Naive thymus-derived CD4-positive, alpha-beta T cell (primary cell): ENCODE measurements at regions of chr6 and their contacts with region 1.

Region 1: GRCh38 chr6:90586836-90587638 is at the start of gene MAP3K7:
- DNase-seq: peak; percentile 83 to 96 (median 93)
- ATAC-seq: peak; percentile 90
- H3K4me3 ChIP-seq: peak within 1 kb of the TSS; percentile 88
- H3K4me3 Mint-ChIP-seq: peak within 1 kb of the TSS; percentile 92 to 99 (median 96)
- H3K27ac ChIP-seq: peak within 1 kb of the TSS; percentile 93
- H3K27ac Mint-ChIP-seq: peak within 1 kb of the TSS; percentile 93 to 100 (median 99)
- H3K4me1 ChIP-seq: peaks cover 17 to 22% of the 10 kb centered on the region in 2 donors
- H3K4me1 Mint-ChIP-seq: peaks cover 24 to 49% (median 45%) of the 10 kb centered on the region in 7 donors
- H3K27me3 ChIP-seq: no peaks in the 10 kb centered on the region
- H3K27me3 Mint-ChIP-seq: peaks cover 5 to 36% (median 11%) of the 10 kb centered on the region in 5 donors
- total RNA-seq, gene MAP3K7: 16.1 to 38.5 (median 29.9) TPM

Region 2: DNA sequence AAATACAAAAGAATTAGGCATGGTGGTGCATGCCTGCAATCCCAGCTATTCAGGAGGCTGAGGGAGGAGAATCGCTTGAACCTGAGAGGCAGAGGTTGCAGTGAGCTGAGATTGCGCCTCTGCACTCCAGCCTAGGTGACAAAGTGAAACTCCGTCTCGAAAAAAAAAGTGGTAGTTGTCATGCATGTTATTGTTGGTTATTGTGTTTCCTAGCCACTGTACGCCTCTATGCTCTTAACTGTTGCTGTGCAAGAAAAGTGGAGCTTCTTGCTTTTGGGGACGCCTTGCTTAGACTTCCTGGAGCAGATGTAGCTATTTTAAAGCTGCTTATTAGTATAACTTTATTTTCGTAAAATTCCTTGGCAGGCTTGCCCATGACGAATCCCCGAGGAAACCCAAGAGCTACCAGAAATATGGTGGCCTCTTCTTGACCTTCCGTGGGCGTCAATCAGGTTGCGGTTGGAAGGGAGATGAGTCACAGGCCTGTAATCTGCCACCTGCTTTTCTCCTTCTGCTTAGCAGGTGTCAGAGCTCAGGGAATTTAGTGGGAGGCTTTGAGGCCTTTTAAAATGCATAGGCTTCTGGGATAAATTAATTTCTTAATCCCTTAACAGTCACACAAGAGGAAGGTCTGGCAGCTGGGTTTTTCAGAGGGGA is 1289.2 kb before region 1 on chr6:
- CTCF ChIA-PET with region 1: no interaction called
- POLR2A ChIA-PET with region 1: no interaction called
- intact Hi-C with region 1: loop called in 1 of 2 experiments (anchors 5 kb)
- DNase-seq: peak in 4 of 9 donors; percentile 19 to 72 (median 24)
- ATAC-seq: peak; percentile 78
- H3K4me3 ChIP-seq: no peak overlapping the region
- H3K4me3 Mint-ChIP-seq: peak overlapping the region in 9 of 10 donors; percentile 12 to 69 (median 34)
- H3K27ac ChIP-seq: no peak overlapping the region
- H3K27ac Mint-ChIP-seq: peak overlapping the region; percentile 15 to 95 (median 63)
- H3K4me1 ChIP-seq: peaks cover 16 to 17% of the 10 kb centered on the region in 2 donors
- H3K4me1 Mint-ChIP-seq: peaks cover 13 to 22% (median 18%) of the 10 kb centered on the region in 7 donors
- H3K27me3 ChIP-seq: no peaks in the 10 kb centered on the region
- H3K27me3 Mint-ChIP-seq: no peaks in the 10 kb centered on the region

Region 3: GRCh38 chr6:89352278-89353117 is 1234.5 kb before region 1 on chr6 and contains the start of gene UBE2J1:
- CTCF ChIA-PET with region 1: no interaction called
- POLR2A ChIA-PET with region 1: no interaction called
- intact Hi-C with region 1: loop called in 1 of 2 experiments (anchors 5 kb)
- DNase-seq: peak; percentile 34 to 87 (median 61)
- ATAC-seq: peak; percentile 89
- H3K4me3 ChIP-seq: peak within 1 kb of the TSS; percentile 67
- H3K4me3 Mint-ChIP-seq: peak within 1 kb of the TSS; percentile 96 to 100 (median 98)
- H3K27ac ChIP-seq: peak within 1 kb of the TSS; percentile 88
- H3K27ac Mint-ChIP-seq: peak within 1 kb of the TSS; percentile 95 to 98 (median 97)
- H3K4me1 ChIP-seq: peaks cover 27 to 30% of the 10 kb centered on the region in 2 donors
- H3K4me1 Mint-ChIP-seq: peaks cover 44 to 81% (median 72%) of the 10 kb centered on the region in 7 donors
- H3K27me3 ChIP-seq: no peaks in the 10 kb centered on the region
- H3K27me3 Mint-ChIP-seq: no peaks in the 10 kb centered on the region
- total RNA-seq, gene UBE2J1: 18.8 to 47.7 (median 27.7) TPM

Region 4: GRCh38 chr6:89432875-89433251 is 1154.2 kb before region 1 on chr6 and contains the start of gene ANKRD6:
- CTCF ChIA-PET with region 1: no interaction called
- POLR2A ChIA-PET with region 1: no interaction called
- intact Hi-C with region 1: loop called in 1 of 2 experiments (anchors 5 kb)
- DNase-seq: peak; percentile 61 to 96 (median 81)
- ATAC-seq: peak; percentile 98
- H3K4me3 ChIP-seq: peak within 1 kb of the TSS; percentile 63
- H3K4me3 Mint-ChIP-seq: peak within 1 kb of the TSS; percentile 83 to 95 (median 90)
- H3K27ac ChIP-seq: peak within 1 kb of the TSS; percentile 46
- H3K27ac Mint-ChIP-seq: peak within 1 kb of the TSS; percentile 43 to 93 (median 82)
- H3K4me1 ChIP-seq: peaks cover 7 to 13% of the 10 kb centered on the region in 2 donors
- H3K4me1 Mint-ChIP-seq: peaks cover 9 to 36% (median 22%) of the 10 kb centered on the region in 7 donors
- H3K27me3 ChIP-seq: no peaks in the 10 kb centered on the region
- H3K27me3 Mint-ChIP-seq: peaks cover 0 to 58% (median 0%) of the 10 kb centered on the region in 5 donors
- total RNA-seq, gene ANKRD6: 3.1 to 6.6 (median 3.8) TPM

Region 5: DNA sequence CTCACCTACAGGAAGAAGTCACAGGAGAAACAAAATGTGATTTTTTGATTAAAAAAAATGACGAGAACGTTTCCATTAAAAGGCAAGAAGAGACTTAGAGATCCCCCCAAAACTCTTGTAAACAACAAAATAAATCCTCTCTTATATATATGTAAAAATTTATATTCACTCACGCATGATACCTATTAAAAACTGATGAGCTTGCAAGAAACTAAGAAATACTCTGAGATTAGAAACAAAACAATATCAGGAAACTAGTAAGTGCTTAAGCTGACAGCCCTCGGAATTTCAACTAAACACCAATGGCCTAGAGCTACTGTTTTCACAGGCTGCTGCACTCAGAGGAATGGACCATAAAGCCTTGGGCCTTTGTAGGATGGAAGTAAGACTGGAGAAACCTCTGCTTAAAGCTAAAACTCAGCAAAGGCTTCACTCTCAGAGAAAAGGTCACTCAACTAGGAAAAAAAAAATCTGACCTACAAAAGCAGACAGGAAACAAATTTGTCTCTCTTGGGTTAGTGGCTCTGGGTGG is 63.2 kb before region 1 on chr6:
- CTCF ChIA-PET with region 1: no interaction called
- POLR2A ChIA-PET with region 1: no interaction called
- intact Hi-C with region 1: no loop called
- DNase-seq: no peak
- ATAC-seq: no peak
- H3K4me3 ChIP-seq: no peak overlapping the region
- H3K4me3 Mint-ChIP-seq: no peak overlapping the region
- H3K27ac ChIP-seq: no peak overlapping the region
- H3K27ac Mint-ChIP-seq: peak overlapping the region in 1 of 9 donors; percentile 25
- H3K4me1 ChIP-seq: no peaks in the 10 kb centered on the region
- H3K4me1 Mint-ChIP-seq: peaks cover 0 to 8% (median 0%) of the 10 kb centered on the region in 7 donors
- H3K27me3 ChIP-seq: no peaks in the 10 kb centered on the region
- H3K27me3 Mint-ChIP-seq: no peaks in the 10 kb centered on the region

Region 6: GRCh38 chr6:90559931-90560330 is 27.1 kb before region 1 on chr6:
- CTCF ChIA-PET with region 1: no interaction called
- POLR2A ChIA-PET with region 1: interaction called, 6 read pairs
- intact Hi-C with region 1: loop called in 1 of 2 experiments (anchors 1 kb)
- DNase-seq: no peak
- ATAC-seq: peak; percentile 37
- H3K4me3 ChIP-seq: no peak overlapping the region
- H3K4me3 Mint-ChIP-seq: peak overlapping the region in 1 of 10 donors; percentile 3
- H3K27ac ChIP-seq: no peak overlapping the region
- H3K27ac Mint-ChIP-seq: peak overlapping the region in 4 of 9 donors; percentile 6 to 17 (median 16)
- H3K4me1 ChIP-seq: peaks cover 5 to 7% of the 10 kb centered on the region in 2 donors
- H3K4me1 Mint-ChIP-seq: peaks cover 12 to 41% (median 31%) of the 10 kb centered on the region in 7 donors
- H3K27me3 ChIP-seq: no peaks in the 10 kb centered on the region
- H3K27me3 Mint-ChIP-seq: no peaks in the 10 kb centered on the region